Panc1 (cell line): ENCODE measurements at regions of chr1 and their contacts with region 1.

Region 1: DNA sequence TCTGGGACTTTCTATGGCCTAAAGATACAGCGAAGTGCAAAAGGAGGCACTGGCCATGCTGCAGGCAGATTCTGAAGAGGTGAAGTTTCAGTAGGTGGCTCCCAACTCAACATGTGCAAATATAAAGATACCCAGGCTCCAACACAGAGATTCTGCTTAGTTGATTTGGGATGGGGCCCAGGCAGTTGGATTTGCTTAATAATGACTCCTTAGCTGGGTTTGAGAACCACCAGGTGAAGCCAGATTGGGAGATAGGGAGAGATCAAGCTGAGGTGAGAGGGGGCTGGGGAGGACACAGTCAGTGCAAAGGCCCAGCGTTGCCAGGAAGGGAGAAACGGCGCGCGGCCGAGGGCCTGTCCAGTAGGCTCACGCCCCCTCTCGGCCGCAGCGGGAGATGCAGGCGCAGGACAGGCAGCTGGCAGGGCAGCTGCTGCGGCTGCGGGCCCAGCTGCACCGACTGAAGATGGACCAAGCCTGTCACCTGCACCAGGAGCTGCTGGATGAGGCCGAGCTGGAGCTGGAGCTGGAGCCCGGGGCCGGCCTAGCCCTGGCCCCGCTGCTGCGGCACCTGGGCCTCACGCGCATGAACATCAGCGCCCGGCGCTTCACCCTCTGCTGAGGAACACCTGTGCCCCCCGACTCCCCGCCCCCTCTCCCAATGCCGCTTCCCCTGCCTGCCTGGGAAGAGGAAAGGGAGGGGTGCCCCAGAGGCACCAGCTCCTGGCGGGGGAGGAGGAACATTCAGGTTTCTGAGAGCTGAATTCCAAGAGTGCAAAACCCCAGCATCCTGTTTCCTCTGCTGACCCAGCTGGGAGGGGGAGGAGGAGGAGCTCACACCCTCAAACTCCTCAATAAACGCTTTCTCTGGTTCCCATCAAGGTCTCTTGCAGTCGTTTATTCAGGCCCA is 1.2 kb downstream of the FAM167B start:
- DNase-seq: no peak
- ATAC-seq: peak; percentile 89
- H3K4me3 ChIP-seq: no peak overlapping the region
- H3K27ac ChIP-seq: no peak overlapping the region
- H3K4me1 ChIP-seq: peaks cover 5% of the 10 kb centered on the region
- H3K27me3 ChIP-seq: no peaks in the 10 kb centered on the region
- CTCF ChIP-seq: peak; percentile 96

Region 2: DNA sequence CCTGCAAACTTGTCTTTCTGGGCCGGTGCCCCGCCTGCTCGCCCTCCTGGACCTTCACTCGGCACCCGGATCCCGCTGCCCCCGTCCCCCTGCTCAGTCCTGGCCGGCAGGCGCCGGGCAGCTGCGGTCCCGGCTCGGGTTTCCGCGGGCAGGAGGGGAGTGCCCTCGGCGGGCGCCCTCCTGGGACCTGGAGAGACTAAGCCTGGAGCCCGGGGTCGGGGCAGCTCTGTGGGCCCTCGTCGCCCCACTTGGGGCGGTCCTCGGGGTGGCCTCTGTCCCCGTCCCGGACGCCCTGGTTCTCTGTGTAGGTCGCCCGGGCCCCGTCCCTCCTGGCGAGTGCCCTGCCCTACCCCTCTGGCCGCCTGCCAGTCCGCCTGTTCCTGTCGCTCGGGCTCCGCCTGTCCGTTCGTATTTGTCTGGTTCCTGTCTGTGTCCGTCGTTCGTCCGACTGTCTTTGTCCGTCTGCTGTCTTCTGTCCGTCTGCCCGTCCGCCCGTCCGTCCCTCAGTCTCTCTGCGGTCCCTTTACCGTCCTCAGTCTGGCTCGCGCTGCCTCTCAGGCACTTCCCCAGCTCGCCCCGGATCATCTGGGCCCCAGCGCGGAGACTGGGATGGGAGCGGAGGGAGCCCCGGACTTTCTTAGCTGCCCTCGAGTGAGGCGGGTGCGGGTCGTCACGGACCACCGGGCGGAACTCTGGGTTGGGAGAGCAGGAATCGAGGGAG is 834.7 kb before region 1 on chr1:
- CTCF ChIA-PET with region 1: no interaction called
- POLR2A ChIA-PET with region 1: no interaction called
- in situ Hi-C with region 1: no loop called
- intact Hi-C with region 1: no loop called
- DNase-seq: no peak
- ATAC-seq: peak; percentile 76
- H3K4me3 ChIP-seq: peak overlapping the region; percentile 62 to 66
- H3K27ac ChIP-seq: peak overlapping the region; percentile 44; the same call in 1 of the 2 replicates
- H3K4me1 ChIP-seq: no peaks in the 10 kb centered on the region; the same call in 1 of the 2 replicates
- H3K27me3 ChIP-seq: no peaks in the 10 kb centered on the region
- CTCF ChIP-seq: no peak

Region 3: GRCh38 chr1:31617917-31618660 is 630.1 kb before region 1 on chr1:
- CTCF ChIA-PET with region 1: no interaction called
- POLR2A ChIA-PET with region 1: no interaction called
- in situ Hi-C with region 1: no loop called
- intact Hi-C with region 1: no loop called
- DNase-seq: no peak
- ATAC-seq: peak; percentile 84
- H3K4me3 ChIP-seq: peak overlapping the region; percentile 45 to 47
- H3K27ac ChIP-seq: no peak overlapping the region
- H3K4me1 ChIP-seq: peaks cover 3% of the 10 kb centered on the region
- H3K27me3 ChIP-seq: peaks cover 5% of the 10 kb centered on the region
- CTCF ChIP-seq: peak; percentile 95

Region 4: DNA sequence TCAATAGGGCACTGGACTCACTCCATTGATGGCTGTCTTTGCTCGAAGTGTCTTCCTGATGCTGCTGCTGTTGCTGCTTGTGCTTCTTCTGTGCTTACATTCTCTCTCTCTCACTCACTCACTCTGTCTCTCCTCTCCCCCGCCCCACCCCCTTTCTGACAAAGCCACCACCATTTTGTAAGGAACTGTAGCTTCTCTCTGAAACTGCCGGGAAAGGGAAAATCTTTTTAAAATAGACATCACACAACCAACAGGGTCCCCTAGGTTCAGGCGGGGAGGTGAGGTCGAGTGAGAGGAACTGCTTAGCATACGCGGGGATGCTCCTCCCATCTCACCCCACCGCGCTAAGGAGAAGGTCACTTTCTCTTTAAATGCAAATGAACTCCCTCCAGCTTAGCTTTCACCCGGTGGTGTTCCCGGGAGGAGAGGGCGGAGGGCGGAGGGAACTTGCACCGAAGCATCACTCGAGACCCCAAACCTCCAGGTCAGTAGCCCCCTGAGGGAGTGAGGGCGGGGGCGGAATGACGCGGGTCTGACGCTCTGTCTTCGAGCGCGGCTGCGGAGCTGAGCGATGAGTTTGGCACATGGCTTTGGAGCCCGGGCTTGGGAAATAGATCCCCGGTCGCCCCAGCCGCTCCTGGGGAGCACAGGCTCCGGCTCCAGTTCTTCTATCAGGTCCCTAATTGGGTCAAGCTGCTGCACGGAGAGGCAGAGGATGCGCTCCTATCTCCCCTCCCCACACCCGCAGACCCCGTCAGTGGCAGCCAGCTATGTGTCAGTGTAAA is 47.8 kb before region 1 on chr1 and contains the start of gene CCDC28B:
- CTCF ChIA-PET with region 1: no interaction called
- POLR2A ChIA-PET with region 1: interaction called, 14 read pairs
- in situ Hi-C with region 1: no loop called
- intact Hi-C with region 1: no loop called
- DNase-seq: no peak
- ATAC-seq: peak; percentile 52
- H3K4me3 ChIP-seq: peak within 1 kb of the TSS; percentile 60 to 71
- H3K27ac ChIP-seq: peak within 1 kb of the TSS; percentile 81
- H3K4me1 ChIP-seq: peaks cover 55% of the 10 kb centered on the region
- H3K27me3 ChIP-seq: no peaks in the 10 kb centered on the region
- CTCF ChIP-seq: no peak
- total RNA-seq, gene CCDC28B: 10.8 TPM

Region 5: DNA sequence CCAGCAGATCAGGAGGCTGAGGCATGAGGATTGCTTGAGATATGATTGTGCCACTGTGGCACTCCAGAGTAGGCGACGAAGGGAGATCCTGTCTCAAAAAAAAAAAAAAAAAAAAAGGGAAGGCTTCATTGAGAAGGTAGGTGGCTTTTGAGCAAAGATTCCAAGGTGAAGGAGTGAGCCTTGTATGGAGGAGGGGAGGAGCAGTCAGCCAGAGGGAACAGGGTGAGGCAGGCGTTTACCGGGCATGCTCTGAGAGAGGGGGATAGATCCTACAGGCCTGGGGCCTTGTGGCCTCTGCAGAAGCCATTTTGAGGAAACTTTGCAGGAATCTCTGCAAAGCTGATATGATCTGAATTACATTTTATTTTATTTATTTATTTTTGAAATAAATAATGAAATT is 38.5 kb after region 1 on chr1:
- CTCF ChIA-PET with region 1: interaction called, 21 read pairs
- POLR2A ChIA-PET with region 1: no interaction called
- in situ Hi-C with region 1: no loop called
- intact Hi-C with region 1: no loop called
- DNase-seq: no peak
- ATAC-seq: no peak
- H3K4me3 ChIP-seq: no peak overlapping the region
- H3K27ac ChIP-seq: no peak overlapping the region
- H3K4me1 ChIP-seq: peaks cover 10% of the 10 kb centered on the region; the same call in 1 of the 2 replicates
- H3K27me3 ChIP-seq: no peaks in the 10 kb centered on the region
- CTCF ChIP-seq: no peak

Region 6: GRCh38 chr1:32291708-32292492 is 43.7 kb after region 1 on chr1 and contains the start of gene HDAC1:
- CTCF ChIA-PET with region 1: interaction called, 12 read pairs
- POLR2A ChIA-PET with region 1: no interaction called
- in situ Hi-C with region 1: no loop called
- intact Hi-C with region 1: no loop called
- DNase-seq: peak; percentile 80
- ATAC-seq: peak; percentile 99
- H3K4me3 ChIP-seq: peak within 1 kb of the TSS; percentile 83 to 89
- H3K27ac ChIP-seq: peak within 1 kb of the TSS; percentile 99
- H3K4me1 ChIP-seq: peaks cover 10% of the 10 kb centered on the region; the same call in 1 of the 2 replicates
- H3K27me3 ChIP-seq: no peaks in the 10 kb centered on the region
- CTCF ChIP-seq: no peak
- total RNA-seq, gene HDAC1: 256 TPM